ENCODE measurements at regions of chr16 and their contacts with region 1.

Region 1: DNA sequence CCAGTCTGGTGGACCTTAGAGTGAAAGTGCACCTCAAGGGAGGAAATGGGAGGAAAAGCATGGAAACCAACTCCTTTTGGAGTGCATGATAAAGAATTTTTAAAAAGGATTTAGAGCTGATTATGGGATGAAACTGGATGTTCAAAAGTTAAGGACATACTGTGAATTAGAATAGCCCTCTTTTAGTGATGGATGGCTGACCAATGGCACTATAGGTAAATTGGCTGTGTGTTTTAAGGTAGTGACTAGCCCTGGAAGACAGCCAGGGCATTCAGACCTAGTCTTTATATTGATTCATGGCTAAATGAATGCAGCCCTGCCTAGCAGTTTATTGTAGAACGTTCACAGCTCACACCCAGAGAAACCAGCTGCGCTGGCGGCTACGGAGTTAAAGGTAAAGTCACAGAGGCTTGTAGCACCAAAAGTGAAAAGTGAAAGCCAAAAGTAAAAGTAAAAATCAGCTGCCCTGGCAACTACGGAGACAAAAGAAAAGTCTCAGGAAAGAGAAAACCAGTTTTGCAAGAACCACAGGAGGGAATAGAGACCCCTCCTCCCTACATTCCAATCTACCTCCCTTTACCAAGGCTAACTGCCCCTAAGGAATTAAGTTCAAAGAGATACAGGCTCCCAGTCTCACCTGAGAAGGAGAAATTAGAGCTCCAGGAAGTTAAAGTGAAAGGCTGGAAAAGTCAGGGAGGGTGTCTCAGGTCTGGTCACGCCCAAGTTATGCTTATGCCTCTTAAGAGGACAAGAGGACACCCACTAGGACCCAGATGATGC is 21.8 kb downstream of the ACSM1 start:
- DNase-seq: peak; percentile 38
- ATAC-seq: peak; percentile 79
- H3K4me3 Mint-ChIP-seq: peak overlapping the region; percentile 76
- H3K27ac Mint-ChIP-seq: peak overlapping the region; percentile 75
- H3K4me1 Mint-ChIP-seq: peaks cover 22% of the 10 kb centered on the region
- H3K27me3 Mint-ChIP-seq: no peaks in the 10 kb centered on the region

Region 2: DNA sequence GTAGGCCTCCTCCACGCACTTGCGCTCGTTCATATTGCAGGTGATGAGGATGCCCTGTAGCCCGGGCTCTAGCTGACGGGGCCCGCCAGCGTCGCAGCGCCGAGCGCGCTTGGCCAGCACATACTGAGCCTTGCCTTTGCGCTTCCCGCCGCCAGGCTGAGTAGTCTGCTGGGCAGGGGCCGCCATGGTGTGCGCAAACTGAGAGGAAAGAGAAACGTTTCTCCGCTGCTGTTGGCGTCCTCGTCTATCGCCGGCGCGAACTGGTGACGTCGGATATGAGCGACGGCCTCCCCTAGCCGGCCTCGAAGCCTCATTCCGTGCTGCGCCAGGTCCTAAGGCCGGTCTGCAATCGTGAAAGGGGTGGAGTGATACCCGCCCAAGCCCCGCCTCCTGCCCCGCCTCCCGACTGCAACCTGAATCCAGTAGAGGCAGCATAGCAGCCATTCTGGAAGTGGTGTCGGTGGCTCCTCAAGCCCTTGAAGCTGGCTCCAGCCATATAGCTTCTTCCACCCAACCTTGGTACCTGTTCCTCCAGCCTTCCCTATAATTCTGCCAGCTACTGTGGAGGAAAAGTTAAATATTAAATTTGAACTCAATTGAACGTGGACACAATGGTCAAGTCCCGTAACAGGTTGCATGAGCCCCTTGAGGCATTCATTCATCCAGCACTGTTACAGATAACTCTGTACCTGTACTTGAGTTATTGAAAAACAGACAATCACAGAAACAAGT is 66.0 kb after region 1 on chr16 and contains the start of gene THUMPD1:
- POLR2A ChIA-PET with region 1: interaction called, 15 read pairs
- DNase-seq: peak; percentile 96
- ATAC-seq: peak; percentile 95
- H3K4me3 Mint-ChIP-seq: peak within 1 kb of the TSS; percentile 94
- H3K27ac Mint-ChIP-seq: peak within 1 kb of the TSS; percentile 92
- H3K4me1 Mint-ChIP-seq: peaks cover 11% of the 10 kb centered on the region
- H3K27me3 Mint-ChIP-seq: no peaks in the 10 kb centered on the region
- total RNA-seq, gene THUMPD1: 53.0 to 53.6 TPM